Ovary (tissue), 10 donors: ENCODE measurements at regions of chr13 and their contacts with region 1.

Region 1: GRCh38 chr13:50969691-50970090 is 60.1 kb downstream of the RNASEH2B start:
- DNase-seq: no peak
- H3K4me3 ChIP-seq: no peak overlapping the region
- H3K27ac ChIP-seq: no peak overlapping the region
- H3K4me1 ChIP-seq: no peaks in the 10 kb centered on the region
- H3K27me3 ChIP-seq: no peaks in the 10 kb centered on the region
- CTCF ChIP-seq: no peak
- EP300 ChIP-seq: no peak
- POLR2A ChIP-seq: no peak

Region 2: DNA sequence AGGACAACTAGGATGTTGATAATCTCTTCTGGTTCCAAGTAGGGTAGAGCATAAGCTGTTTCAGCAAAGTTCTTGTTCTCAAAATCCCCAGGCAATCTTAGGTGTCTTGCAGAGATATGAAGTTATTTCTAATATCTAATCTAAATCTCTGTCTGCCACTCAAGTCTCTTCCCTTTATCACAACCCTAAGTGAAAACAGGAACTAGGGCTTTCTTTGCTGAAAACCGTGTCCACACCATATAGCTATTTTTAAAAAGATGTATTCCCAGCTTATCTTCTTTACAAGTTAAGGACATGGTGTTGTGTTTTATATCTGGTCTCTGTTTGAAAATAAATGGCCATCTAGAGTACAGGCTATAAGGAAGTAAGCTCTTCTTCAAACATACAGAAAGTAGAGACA is 71.4 kb before region 1 on chr13:
- intact Hi-C with region 1: no loop called
- DNase-seq: no peak
- H3K4me3 ChIP-seq: no peak overlapping the region
- H3K27ac ChIP-seq: no peak overlapping the region
- H3K4me1 ChIP-seq: no peaks in the 10 kb centered on the region
- H3K27me3 ChIP-seq: no peaks in the 10 kb centered on the region
- CTCF ChIP-seq: no peak
- EP300 ChIP-seq: no peak
- POLR2A ChIP-seq: no peak

Region 3: DNA sequence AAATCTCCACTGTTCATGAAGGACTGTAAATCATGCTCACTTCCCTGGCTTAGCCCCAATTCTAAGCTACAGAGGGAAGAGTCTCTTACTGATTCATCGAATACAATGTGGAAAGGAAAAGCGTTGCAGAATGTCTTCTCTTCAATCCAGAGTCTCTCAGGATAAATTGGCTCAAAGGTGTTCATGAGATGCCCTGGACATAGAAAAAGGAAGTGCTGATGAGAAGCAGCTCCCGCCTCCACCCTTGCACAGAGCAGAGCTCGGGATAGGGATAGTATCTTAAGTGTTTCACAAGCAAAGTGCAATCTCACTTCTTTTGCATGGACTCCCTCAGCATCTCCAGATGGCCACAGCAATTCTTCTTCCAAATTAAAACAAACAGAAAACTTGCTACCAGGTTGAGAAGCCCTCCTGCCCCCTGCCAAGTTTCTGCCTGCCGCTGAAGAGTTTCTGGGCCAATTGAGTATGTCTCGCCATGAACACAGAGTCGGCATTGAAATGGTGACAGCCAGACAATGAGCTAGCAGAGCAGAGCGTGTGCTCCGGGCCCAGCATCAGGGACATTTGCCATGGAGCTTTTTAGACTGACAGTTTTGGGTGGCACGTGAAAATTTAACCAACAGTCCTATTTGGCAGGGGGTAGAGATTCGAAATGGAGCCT is 55.7 kb after region 1 on chr13:
- intact Hi-C with region 1: loop called in 1 of 4 experiments (anchors 2 kb)
- DNase-seq: no peak
- H3K4me3 ChIP-seq: no peak overlapping the region
- H3K27ac ChIP-seq: no peak overlapping the region
- H3K4me1 ChIP-seq: no peaks in the 10 kb centered on the region
- H3K27me3 ChIP-seq: no peaks in the 10 kb centered on the region
- CTCF ChIP-seq: no peak
- EP300 ChIP-seq: no peak
- POLR2A ChIP-seq: no peak